Activated CD4-positive, alpha-beta memory T cell treated with anti-CD3 and anti-CD28 coated beads for 36 hours (primary cell): ENCODE measurements at regions of chr2 and their contacts with region 1.

Region 1: GRCh38 chr2:189698020-189698887 is 23.8 kb downstream of the ANKAR start:
- DNase-seq: no peak
- H3K4me3 Mint-ChIP-seq: no peak overlapping the region
- H3K27ac Mint-ChIP-seq: no peak overlapping the region
- H3K4me1 Mint-ChIP-seq: no peaks in the 10 kb centered on the region
- H3K27me3 Mint-ChIP-seq: no peaks in the 10 kb centered on the region

Region 2: DNA sequence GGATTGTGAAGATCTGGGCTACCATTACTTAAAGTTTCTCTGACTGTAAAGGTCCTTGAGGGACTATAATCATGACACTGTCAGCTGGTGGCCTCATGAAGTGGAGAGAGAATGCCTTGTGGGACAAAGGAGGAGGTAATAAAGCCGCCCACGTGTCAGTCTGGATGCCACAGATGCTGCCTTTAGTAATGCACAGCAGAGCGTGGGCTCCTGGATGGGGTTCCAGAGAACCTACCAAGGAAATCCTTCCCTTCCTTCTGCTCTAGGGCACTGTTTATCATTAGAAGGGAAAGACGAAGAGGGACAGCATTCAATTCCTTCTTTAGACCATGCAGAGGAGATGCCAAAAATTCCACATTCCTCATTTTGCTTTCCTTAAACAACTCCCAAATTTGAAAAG is 582.2 kb before region 1 on chr2:
- CTCF ChIA-PET with region 1: no interaction called
- POLR2A ChIA-PET with region 1: no interaction called
- intact Hi-C with region 1: no loop called
- DNase-seq: no peak
- H3K4me3 Mint-ChIP-seq: no peak overlapping the region
- H3K27ac Mint-ChIP-seq: no peak overlapping the region
- H3K4me1 Mint-ChIP-seq: peaks cover 2% of the 10 kb centered on the region
- H3K27me3 Mint-ChIP-seq: no peaks in the 10 kb centered on the region

Region 3: GRCh38 chr2:189674374-189675112 is 23.7 kb before region 1 on chr2 and contains the start of gene ANKAR:
- CTCF ChIA-PET with region 1: interaction called, 25 read pairs
- POLR2A ChIA-PET with region 1: no interaction called
- intact Hi-C with region 1: loop called (anchors 1 kb)
- DNase-seq: peak; percentile 86
- H3K4me3 Mint-ChIP-seq: peak within 1 kb of the TSS; percentile 92
- H3K27ac Mint-ChIP-seq: peak within 1 kb of the TSS; percentile 96
- H3K4me1 Mint-ChIP-seq: peaks cover 30% of the 10 kb centered on the region
- H3K27me3 Mint-ChIP-seq: no peaks in the 10 kb centered on the region
- total RNA-seq, gene ANKAR: 3.4 to 4.2 TPM